ENCODE measurements at regions of chr2 and their contacts with region 1.

Region 1: DNA sequence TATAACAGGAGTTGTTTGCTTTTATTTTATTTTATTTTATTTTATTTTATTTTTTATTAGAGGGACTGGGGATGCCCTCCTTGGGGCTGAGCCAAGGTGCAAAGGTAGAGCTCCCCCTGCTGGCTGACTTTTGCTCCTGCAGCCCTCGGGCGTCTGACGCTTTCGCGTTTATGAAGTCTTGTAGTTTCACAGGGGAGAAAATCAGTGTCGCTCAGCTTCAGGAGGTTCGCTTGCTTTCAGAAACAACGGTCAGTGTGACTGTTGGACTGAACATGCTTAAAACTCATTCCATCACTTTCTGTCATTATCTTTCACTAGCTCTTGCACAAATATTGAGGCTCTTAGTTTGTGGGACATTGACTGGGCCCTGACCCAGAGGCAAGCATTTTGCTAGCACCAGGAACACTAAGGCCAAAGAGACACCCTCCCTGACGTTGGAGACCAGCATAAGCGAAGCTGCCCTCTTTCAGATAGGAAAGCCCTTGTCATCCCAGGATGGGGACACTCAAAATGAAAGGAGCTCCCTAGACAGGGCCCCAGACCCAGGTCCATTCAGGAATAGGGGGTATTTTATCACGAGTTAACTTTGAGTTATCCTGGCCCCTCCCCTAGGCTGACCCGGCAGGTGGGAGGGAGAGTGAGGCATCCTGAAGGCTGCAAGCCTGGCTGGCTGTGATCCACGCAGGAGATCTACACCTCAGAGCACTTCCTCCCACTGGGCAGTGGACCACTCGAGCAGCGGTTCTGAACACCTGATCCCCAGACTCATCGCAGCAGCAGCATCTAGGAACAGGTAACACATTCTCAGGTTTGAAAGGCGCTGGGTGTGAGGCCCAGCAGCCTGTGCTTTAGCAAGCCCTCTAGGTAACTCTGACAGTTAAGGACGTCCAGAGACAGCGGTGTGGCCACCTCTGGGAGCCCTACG is 34.4 kb downstream of the LGALSL start:
- DNase-seq: peak; percentile 58 to 97
- H3K4me3 ChIP-seq: no peak overlapping the region
- H3K27ac ChIP-seq: no peak overlapping the region
- H3K4me1 ChIP-seq: peaks cover 5 to 12% (median 10%) of the 10 kb centered on the region in 4 experiments
- H3K27me3 ChIP-seq: peaks cover 0 to 3% (median 0%) of the 10 kb centered on the region in 4 experiments; a peak in 1 of 7 replicates
- CTCF ChIP-seq: peak; percentile 86
- EP300 ChIP-seq: no peak
- POLR2A ChIP-seq: no peak
- RAD21 ChIP-seq: peak; percentile 81 to 87

Region 2: DNA sequence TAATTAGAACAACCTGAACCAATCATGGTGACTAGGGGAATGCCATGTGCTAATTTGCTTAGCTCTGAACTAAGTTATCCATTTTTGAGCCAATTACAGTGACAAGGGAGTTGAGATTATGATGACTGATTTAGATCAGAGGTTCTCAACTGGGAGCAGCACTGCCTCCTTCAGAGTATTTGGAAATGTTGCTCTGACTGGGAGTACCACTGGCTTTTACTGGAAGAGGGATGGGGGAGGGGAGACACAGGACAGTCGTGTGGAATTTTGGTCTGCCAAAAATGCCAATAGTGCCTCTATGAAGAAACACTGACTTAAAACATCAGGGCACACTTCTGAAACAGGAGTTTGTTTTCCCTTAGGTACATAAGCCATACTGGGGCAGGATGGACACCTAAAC is 421.0 kb before region 1 on chr2:
- CTCF ChIA-PET with region 1: no interaction called
- POLR2A ChIA-PET with region 1: no interaction called
- DNase-seq: no peak
- H3K4me3 ChIP-seq: no peak overlapping the region
- H3K27ac ChIP-seq: no peak overlapping the region
- H3K4me1 ChIP-seq: peaks cover 3 to 10% (median 6%) of the 10 kb centered on the region in 4 experiments; a peak in 5 of 7 replicates
- H3K27me3 ChIP-seq: no peaks in the 10 kb centered on the region
- CTCF ChIP-seq: peak in 2 of 3 experiments; percentile 7 to 42; a peak in 1 of 4 replicates
- EP300 ChIP-seq: no peak
- POLR2A ChIP-seq: no peak
- RAD21 ChIP-seq: peak in 1 of 2 experiments; percentile 30; a peak in 2 of 4 replicates

Region 3: GRCh38 chr2:64359892-64360657 is 128.2 kb before region 1 on chr2:
- CTCF ChIA-PET with region 1: interaction called, 41 read pairs
- POLR2A ChIA-PET with region 1: no interaction called
- DNase-seq: no peak
- H3K4me3 ChIP-seq: no peak overlapping the region
- H3K27ac ChIP-seq: no peak overlapping the region
- H3K4me1 ChIP-seq: peaks cover 3 to 18% (median 7%) of the 10 kb centered on the region in 4 experiments; a peak in 6 of 7 replicates
- H3K27me3 ChIP-seq: 0 out of 7 replicates have a peak, but pooled peaks cover 0 to 4% (median 0%) of the 10 kb centered on the region in 4 experiments
- CTCF ChIP-seq: peak in 1 of 3 experiments; percentile 26; a peak in 1 of 4 replicates
- EP300 ChIP-seq: no peak
- POLR2A ChIP-seq: no peak
- RAD21 ChIP-seq: peak; percentile 9 to 24; a peak in 2 of 4 replicates

Region 4: GRCh38 chr2:64459575-64459974 is 28.7 kb before region 1 on chr2:
- CTCF ChIA-PET with region 1: interaction called, 20 read pairs
- POLR2A ChIA-PET with region 1: no interaction called
- DNase-seq: no peak
- H3K4me3 ChIP-seq: no peak overlapping the region
- H3K27ac ChIP-seq: no peak overlapping the region
- H3K4me1 ChIP-seq: peaks cover 0 to 4% (median 0%) of the 10 kb centered on the region in 4 experiments; a peak in 1 of 7 replicates
- H3K27me3 ChIP-seq: no peaks in the 10 kb centered on the region
- CTCF ChIP-seq: no peak
- EP300 ChIP-seq: no peak
- POLR2A ChIP-seq: no peak
- RAD21 ChIP-seq: no peak

Region 5: DNA sequence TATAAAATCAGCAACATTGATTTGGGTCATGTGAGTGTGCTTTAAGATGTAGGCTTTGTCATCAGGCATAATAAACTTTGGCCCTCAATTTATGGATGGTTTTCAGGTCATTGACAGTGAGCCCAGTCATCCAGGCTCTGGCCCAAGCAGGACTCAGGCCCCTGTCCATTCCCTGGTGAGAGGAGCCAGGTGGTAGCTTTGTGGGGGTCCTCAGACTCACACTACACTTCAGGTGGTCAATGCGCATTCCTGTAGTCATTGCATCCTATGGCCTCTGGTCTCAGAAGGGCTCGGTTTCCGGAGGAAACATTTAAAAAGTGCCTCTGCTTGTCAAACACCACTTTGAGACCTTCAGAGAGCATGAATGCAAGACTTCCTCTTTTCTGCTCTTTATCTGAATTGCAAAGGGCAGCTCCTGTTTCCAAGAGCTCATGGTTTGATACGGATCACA is 14.2 kb before region 1 on chr2:
- CTCF ChIA-PET with region 1: interaction called, 56 read pairs
- POLR2A ChIA-PET with region 1: interaction called, 3 read pairs
- DNase-seq: no peak
- H3K4me3 ChIP-seq: no peak overlapping the region
- H3K27ac ChIP-seq: no peak overlapping the region
- H3K4me1 ChIP-seq: peaks cover 0 to 9% (median 4%) of the 10 kb centered on the region in 4 experiments; a peak in 5 of 7 replicates
- H3K27me3 ChIP-seq: no peaks in the 10 kb centered on the region
- CTCF ChIP-seq: no peak
- EP300 ChIP-seq: no peak
- POLR2A ChIP-seq: no peak; a peak in 1 of 3 replicates
- RAD21 ChIP-seq: no peak

Region 6: DNA sequence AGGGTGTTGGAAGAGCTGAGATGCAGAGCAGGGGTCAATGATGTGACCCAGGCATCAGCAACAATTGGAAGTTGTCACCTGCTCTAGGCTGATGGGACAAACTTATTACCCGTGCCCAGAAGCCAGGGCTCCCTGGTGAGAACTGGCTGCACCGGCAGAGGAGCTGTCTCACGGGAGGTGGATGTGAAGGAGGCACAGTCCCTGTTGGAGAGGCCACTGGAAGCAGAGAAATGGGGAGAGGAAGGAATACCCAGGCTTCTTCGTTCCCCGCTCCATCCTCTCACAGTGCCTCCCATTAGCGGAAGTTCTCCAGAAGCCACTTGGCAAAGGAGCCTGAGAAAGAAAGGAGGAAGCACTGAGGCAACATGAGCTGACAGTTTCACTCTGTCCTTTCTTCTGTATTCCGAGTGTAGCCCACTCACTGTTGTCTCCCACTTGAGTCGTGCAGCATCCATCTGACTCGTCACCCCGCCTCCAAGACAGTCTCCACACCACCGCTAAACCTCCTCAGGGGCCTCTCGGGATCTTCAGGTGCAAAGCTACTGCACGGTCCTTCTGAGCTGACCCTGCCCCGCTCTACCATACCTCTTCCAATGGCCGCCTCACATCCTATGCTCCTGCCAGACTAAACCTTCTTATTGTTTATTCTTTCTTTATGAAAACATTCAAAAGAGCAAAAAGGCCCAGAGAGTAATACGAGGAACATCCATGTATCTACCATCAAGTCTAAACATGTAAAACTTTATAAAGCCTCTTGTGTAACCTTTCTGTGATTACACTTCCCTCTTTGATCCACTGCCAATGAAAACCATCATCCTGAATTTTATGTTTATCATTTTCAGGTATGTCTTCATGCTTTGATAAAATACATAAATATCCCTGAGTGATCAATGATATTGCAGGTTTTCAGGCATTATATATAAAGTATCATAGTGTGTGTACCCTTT is 16.7 kb after region 1 on chr2:
- CTCF ChIA-PET with region 1: interaction called, 39 read pairs
- POLR2A ChIA-PET with region 1: no interaction called
- DNase-seq: no peak
- H3K4me3 ChIP-seq: no peak overlapping the region
- H3K27ac ChIP-seq: no peak overlapping the region; the same call in 1 of the 2 replicates
- H3K4me1 ChIP-seq: no peaks in the 10 kb centered on the region
- H3K27me3 ChIP-seq: no peaks in the 10 kb centered on the region
- CTCF ChIP-seq: no peak
- EP300 ChIP-seq: no peak
- POLR2A ChIP-seq: no peak
- RAD21 ChIP-seq: no peak

Region 7: DNA sequence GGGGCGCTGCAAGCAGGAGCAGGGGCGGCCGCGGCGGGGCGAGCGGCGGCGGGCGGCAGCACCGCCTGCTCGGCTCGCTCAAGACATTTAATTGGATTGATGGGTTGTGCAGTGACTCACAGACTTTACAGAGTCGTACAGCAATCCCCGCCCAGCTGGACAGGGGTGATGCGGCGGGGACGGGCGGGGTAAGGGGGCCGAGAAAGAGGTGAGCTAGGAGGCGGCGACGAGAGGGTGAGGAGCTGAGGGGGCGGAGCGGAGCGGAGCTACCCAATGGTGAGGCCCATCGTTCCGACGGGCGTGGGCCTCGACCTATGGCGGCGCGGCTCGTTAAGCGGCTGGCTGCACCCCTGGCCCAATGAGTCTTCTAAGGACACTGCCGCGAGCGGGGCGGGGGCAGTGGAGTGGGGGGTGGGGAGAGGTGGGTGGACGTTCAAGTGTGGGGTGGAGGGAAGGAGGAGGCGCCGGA is 262.5 kb after region 1 on chr2:
- CTCF ChIA-PET with region 1: no interaction called
- POLR2A ChIA-PET with region 1: no interaction called
- DNase-seq: peak; percentile 96
- H3K4me3 ChIP-seq: peak overlapping the region; percentile 88 to 93 (median 88)
- H3K27ac ChIP-seq: peak overlapping the region; percentile 2; the same call in 1 of the 2 replicates
- H3K4me1 ChIP-seq: peaks cover 0 to 4% (median 2%) of the 10 kb centered on the region in 4 experiments; a peak in 3 of 7 replicates
- H3K27me3 ChIP-seq: peaks cover 0 to 12% (median 6%) of the 10 kb centered on the region in 4 experiments; a peak in 3 of 7 replicates
- CTCF ChIP-seq: no peak
- EP300 ChIP-seq: no peak
- POLR2A ChIP-seq: peak in 1 of 2 experiments; percentile 42; a peak in 1 of 3 replicates
- RAD21 ChIP-seq: peak in 1 of 2 experiments; percentile 14; a peak in 1 of 4 replicates

Measured in H1 (cell line).